Naive thymus-derived CD4-positive, alpha-beta T cell (primary cell): ENCODE measurements at regions of chr7 and their contacts with region 1.

Region 1: DNA sequence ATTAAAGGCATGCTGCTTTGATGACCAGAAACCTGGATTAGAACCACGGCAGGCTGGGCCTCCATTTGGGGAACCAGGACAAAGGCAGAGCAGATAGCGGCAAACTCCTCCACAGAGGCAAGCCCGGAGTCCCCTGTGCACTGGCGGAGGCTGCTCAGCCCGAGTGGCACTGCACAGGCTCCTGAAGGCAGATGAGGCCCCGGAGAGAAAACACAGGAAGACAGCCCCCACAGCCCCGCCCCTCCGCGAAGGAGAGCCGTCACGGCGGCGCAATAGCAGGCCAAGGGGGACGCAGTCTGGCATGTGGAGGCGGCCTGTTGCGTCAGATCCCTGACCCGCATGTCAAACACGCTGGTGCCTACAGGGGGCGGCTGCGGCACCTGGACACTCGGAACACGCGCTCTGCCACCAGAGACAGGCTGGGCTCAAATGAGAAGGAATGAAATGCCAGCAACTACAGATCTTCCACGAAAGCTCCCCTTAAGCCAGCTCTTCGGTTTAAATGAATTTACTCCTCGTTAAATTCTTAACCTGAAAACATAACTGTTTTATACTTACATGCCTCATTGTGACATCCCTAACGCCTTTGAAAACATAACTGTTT is 128.5 kb downstream of the MAD1L1 start:
- DNase-seq: peak; percentile 43 to 79 (median 70)
- ATAC-seq: peak; percentile 76
- H3K4me3 ChIP-seq: peak overlapping the region; percentile 15
- H3K4me3 Mint-ChIP-seq: peak overlapping the region in 9 of 10 donors; percentile 19 to 67 (median 56)
- H3K27ac ChIP-seq: peak overlapping the region; percentile 42
- H3K27ac Mint-ChIP-seq: peak overlapping the region; percentile 3 to 94 (median 71)
- H3K4me1 ChIP-seq: peaks cover 7 to 24% of the 10 kb centered on the region in 2 donors
- H3K4me1 Mint-ChIP-seq: peaks cover 18 to 42% (median 31%) of the 10 kb centered on the region in 7 donors
- H3K27me3 ChIP-seq: no peaks in the 10 kb centered on the region
- H3K27me3 Mint-ChIP-seq: no peaks in the 10 kb centered on the region

Region 2: DNA sequence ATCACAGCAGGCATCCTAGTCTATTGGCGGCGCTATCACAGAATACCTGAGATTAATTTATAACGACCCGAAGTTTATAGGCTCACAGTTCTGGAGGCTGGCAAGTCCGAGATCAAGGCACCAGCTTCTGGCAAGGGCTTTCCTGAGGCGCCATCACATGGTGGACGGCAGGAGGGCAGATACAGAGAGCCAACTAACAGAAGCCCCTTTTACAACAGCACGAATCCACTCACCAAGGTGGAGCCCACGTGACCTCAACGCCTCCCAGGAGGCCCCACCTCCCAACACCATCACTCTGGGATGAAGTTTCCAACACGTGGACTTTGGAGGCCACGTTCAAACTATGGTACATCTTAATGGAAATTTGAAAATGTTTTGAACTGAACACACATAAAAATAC is 178.9 kb before region 1 on chr7:
- CTCF ChIA-PET with region 1: interaction called, 4 read pairs
- POLR2A ChIA-PET with region 1: no interaction called
- intact Hi-C with region 1: loop called in 1 of 2 experiments (anchors 2 kb)
- DNase-seq: no peak
- ATAC-seq: no peak
- H3K4me3 ChIP-seq: peak overlapping the region; percentile 6
- H3K4me3 Mint-ChIP-seq: peak overlapping the region; percentile 63 to 97 (median 73)
- H3K27ac ChIP-seq: peak overlapping the region; percentile 83
- H3K27ac Mint-ChIP-seq: peak overlapping the region; percentile 77 to 99 (median 89)
- H3K4me1 ChIP-seq: peaks cover 37 to 80% of the 10 kb centered on the region in 2 donors
- H3K4me1 Mint-ChIP-seq: peaks cover 63 to 89% (median 79%) of the 10 kb centered on the region in 7 donors
- H3K27me3 ChIP-seq: no peaks in the 10 kb centered on the region
- H3K27me3 Mint-ChIP-seq: peaks cover 0 to 18% (median 0%) of the 10 kb centered on the region in 5 donors

Region 3: GRCh38 chr7:2037808-2038522 is 66.2 kb before region 1 on chr7:
- CTCF ChIA-PET with region 1: no interaction called
- POLR2A ChIA-PET with region 1: no interaction called
- intact Hi-C with region 1: loop called in 1 of 2 experiments (anchors 10 kb)
- DNase-seq: peak in 7 of 9 donors; percentile 44 to 66 (median 53)
- ATAC-seq: peak; percentile 65
- H3K4me3 ChIP-seq: peak overlapping the region; percentile 83
- H3K4me3 Mint-ChIP-seq: peak overlapping the region; percentile 83 to 95 (median 92)
- H3K27ac ChIP-seq: peak overlapping the region; percentile 70
- H3K27ac Mint-ChIP-seq: peak overlapping the region; percentile 73 to 95 (median 92)
- H3K4me1 ChIP-seq: peaks cover 18 to 23% of the 10 kb centered on the region in 2 donors
- H3K4me1 Mint-ChIP-seq: peaks cover 37 to 66% (median 59%) of the 10 kb centered on the region in 7 donors
- H3K27me3 ChIP-seq: no peaks in the 10 kb centered on the region
- H3K27me3 Mint-ChIP-seq: no peaks in the 10 kb centered on the region

Region 4: GRCh38 chr7:2069472-2069860 is 34.7 kb before region 1 on chr7:
- CTCF ChIA-PET with region 1: interaction called, 3 read pairs
- POLR2A ChIA-PET with region 1: interaction called, 3 read pairs
- intact Hi-C with region 1: loop called in 1 of 2 experiments (anchors 5 kb)
- DNase-seq: no peak
- ATAC-seq: no peak
- H3K4me3 ChIP-seq: no peak overlapping the region
- H3K4me3 Mint-ChIP-seq: no peak overlapping the region
- H3K27ac ChIP-seq: no peak overlapping the region
- H3K27ac Mint-ChIP-seq: peak overlapping the region in 1 of 9 donors; percentile 72
- H3K4me1 ChIP-seq: peaks cover 6 to 26% of the 10 kb centered on the region in 2 donors
- H3K4me1 Mint-ChIP-seq: peaks cover 7 to 50% (median 33%) of the 10 kb centered on the region in 7 donors
- H3K27me3 ChIP-seq: no peaks in the 10 kb centered on the region
- H3K27me3 Mint-ChIP-seq: no peaks in the 10 kb centered on the region

Region 5: GRCh38 chr7:2195400-2196246 is 91.4 kb after region 1 on chr7:
- CTCF ChIA-PET with region 1: no interaction called
- POLR2A ChIA-PET with region 1: no interaction called
- intact Hi-C with region 1: no loop called
- DNase-seq: no peak
- ATAC-seq: no peak
- H3K4me3 ChIP-seq: no peak overlapping the region
- H3K4me3 Mint-ChIP-seq: no peak overlapping the region
- H3K27ac ChIP-seq: no peak overlapping the region
- H3K27ac Mint-ChIP-seq: no peak overlapping the region
- H3K4me1 ChIP-seq: no peaks in the 10 kb centered on the region
- H3K4me1 Mint-ChIP-seq: peaks cover 0 to 5% (median 0%) of the 10 kb centered on the region in 7 donors
- H3K27me3 ChIP-seq: no peaks in the 10 kb centered on the region
- H3K27me3 Mint-ChIP-seq: no peaks in the 10 kb centered on the region

Region 6: DNA sequence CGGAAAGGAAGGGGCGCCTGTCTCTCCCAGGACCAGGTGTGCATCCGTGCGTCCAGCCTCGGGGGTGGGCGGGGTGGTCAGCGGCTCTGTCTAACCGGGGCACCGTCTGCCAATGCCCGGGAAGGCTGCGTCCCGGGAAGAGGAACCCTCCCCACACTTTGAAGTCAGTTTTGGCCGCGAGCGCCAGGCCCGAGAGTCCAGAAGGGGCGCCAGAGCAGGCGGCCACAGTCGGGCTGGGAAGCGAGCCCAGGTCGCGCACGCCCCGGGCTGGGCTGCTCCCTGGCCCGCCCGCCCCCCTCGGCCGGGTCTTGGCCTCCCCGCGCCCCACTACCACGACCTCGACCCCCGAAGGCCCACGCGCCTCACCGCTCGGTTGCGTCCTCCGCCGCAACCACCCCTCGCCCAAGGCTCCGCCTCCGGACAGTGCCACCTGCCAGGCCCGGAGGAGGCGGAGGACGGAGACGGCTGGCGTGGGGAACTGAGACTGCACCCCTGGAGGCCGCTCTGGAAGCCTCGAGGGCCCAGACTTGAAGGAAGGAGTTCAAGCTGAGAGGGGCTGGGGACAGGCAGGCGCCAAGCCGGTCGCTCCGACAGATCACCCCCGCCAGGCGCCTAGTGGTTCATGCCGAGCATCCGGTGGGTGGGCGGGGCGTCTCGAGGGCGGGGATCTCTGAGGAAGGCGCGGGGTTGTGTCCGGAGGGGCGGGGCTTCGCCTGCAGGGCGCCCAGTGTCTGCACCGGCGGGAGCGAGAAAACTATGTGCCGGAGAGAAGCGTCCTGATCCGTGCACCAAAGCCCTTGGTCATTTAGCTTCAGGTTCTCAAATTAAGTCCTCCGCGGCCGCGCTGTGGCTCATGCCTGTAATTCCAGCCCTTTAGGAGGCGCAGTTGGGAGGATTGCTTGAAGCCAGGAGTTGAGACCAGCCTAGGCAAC is 451.2 kb after region 1 on chr7 and contains the start of gene BRAT1:
- CTCF ChIA-PET with region 1: no interaction called
- POLR2A ChIA-PET with region 1: no interaction called
- intact Hi-C with region 1: no loop called
- DNase-seq: peak; percentile 84 to 95 (median 92)
- ATAC-seq: peak; percentile 95
- H3K4me3 ChIP-seq: peak within 1 kb of the TSS; percentile 77
- H3K4me3 Mint-ChIP-seq: peak within 1 kb of the TSS; percentile 77 to 92 (median 88)
- H3K27ac ChIP-seq: peak within 1 kb of the TSS; percentile 100
- H3K27ac Mint-ChIP-seq: peak within 1 kb of the TSS; percentile 48 to 93 (median 85)
- H3K4me1 ChIP-seq: peaks cover 15 to 22% of the 10 kb centered on the region in 2 donors
- H3K4me1 Mint-ChIP-seq: peaks cover 22 to 50% (median 36%) of the 10 kb centered on the region in 7 donors
- H3K27me3 ChIP-seq: no peaks in the 10 kb centered on the region
- H3K27me3 Mint-ChIP-seq: no peaks in the 10 kb centered on the region
- total RNA-seq, gene BRAT1: 24.6 to 45.5 (median 37.0) TPM

Region 7: DNA sequence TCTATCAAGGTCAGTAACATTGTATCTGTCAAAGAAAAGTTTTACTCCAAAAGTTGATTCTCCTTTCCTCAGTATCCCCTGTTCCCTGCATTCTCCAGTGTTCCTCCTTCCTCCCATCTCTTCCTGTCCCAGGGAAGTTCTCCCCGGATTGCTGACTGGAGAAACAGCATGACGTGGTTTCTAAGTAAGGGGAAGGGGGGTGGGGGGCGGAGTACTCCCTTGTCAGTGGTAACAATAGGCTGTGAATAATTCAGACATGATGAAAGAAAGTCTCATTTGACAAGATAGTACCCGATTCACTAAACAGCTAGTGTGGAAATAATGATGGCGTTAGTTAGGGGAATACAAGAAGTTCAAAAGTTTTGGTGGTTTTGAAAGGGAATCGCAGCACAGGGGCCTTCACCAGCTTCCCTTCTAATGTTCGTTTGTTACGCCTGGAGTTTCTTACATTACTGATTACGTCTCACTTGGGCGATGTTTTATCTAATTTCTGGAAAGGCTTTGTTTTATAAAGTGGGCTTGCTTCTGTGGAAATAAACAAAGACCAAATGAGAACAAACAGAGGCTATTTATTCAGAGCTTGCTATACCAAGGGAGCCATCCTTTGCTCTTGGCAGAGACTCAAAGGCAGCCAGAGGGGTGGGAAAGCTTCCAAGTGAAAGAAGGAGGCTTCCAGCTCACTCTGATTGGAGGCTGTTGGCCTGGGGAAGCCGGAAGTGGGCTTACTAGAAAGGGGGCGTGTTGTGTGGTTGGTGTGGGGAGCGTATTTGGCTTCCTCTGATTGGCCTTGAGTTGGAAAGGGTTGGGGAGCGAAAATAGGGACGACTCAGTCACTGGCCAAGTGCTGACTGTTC is 1650.5 kb after region 1 on chr7:
- CTCF ChIA-PET with region 1: no interaction called
- POLR2A ChIA-PET with region 1: no interaction called
- intact Hi-C with region 1: no loop called
- DNase-seq: no peak
- ATAC-seq: no peak
- H3K4me3 ChIP-seq: no peak overlapping the region
- H3K4me3 Mint-ChIP-seq: no peak overlapping the region
- H3K27ac ChIP-seq: no peak overlapping the region
- H3K27ac Mint-ChIP-seq: no peak overlapping the region
- H3K4me1 ChIP-seq: no peaks in the 10 kb centered on the region
- H3K4me1 Mint-ChIP-seq: no peaks in the 10 kb centered on the region
- H3K27me3 ChIP-seq: no peaks in the 10 kb centered on the region
- H3K27me3 Mint-ChIP-seq: peaks cover 0 to 4% (median 0%) of the 10 kb centered on the region in 5 donors